Gastrocnemius medialis (tissue), 4 donors: ENCODE measurements at regions of chr4 and their contacts with region 1.

Region 1: DNA sequence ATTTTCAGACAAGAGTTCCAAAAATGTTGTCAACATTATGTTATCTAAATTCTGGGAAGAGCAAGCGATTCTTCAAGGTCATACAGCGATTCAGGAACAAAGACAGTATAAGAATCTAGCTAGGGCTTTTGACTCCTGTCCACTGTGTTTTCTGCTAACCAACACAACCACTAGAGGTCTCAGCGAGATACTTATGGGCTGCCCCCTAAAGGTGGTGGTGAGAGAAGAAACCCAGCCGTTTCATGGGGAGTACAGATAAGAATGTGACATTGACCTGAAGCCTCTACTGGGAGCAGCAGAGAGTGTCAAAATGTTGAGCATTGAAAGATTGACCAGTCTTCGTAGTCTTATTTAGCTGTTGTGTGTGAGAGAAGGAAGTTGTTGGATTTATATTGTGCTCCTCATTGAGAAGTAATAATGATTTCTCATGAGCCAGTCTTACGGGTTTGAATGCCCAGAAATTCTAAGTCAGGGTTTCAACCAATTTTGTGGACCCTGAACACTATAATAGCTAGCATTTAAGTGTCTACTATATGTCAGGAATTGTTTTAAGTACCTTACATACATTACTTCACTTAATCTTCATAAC is 168.3 kb downstream of the SPRY1 start:
- DNase-seq: peak; percentile 15 to 23
- ATAC-seq: peak; percentile 93 to 95
- H3K4me3 ChIP-seq: no peak overlapping the region
- H3K27ac ChIP-seq: no peak overlapping the region
- H3K4me1 ChIP-seq: no peaks in the 10 kb centered on the region
- H3K27me3 ChIP-seq: no peaks in the 10 kb centered on the region
- CTCF ChIP-seq: peak; percentile 63 to 84 (median 70)
- POLR2A ChIP-seq: no peak

Region 2: DNA sequence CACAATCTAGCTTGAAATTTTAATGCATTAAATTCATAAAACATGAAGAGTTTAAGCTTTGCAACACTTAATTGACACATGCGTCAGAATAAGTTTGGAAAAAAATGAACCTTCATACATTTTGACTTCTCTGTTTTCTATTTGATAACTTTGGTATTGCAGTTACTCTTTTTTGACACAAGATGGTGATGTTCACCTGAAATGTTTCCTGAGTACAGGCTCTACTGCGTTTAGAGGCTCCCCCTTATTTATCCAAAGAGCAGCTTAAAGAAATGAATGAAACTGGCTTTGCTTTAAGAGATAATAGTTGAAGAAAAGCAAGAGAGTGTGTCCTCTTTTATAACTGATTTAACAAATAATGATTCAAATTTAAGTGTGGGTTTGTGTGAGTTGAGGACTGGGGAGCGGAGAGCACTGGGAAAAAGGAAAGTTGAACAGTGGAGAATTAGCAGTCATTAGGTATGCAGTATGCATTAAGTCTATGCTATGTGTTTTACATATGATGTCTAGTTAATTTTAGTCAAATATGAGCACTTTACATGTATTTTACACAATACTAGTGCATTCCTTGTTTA is 461.9 kb before region 1 on chr4:
- in situ Hi-C with region 1: no loop called
- intact Hi-C with region 1: loop called (anchors 5 kb)
- DNase-seq: no peak
- ATAC-seq: peak in 1 of 2 donors; percentile 78
- H3K4me3 ChIP-seq: no peak overlapping the region
- H3K27ac ChIP-seq: no peak overlapping the region
- H3K4me1 ChIP-seq: peaks cover 0 to 3% of the 10 kb centered on the region in 2 donors
- H3K27me3 ChIP-seq: no peaks in the 10 kb centered on the region
- CTCF ChIP-seq: peak; percentile 47 to 75 (median 67)
- POLR2A ChIP-seq: no peak

Region 3: DNA sequence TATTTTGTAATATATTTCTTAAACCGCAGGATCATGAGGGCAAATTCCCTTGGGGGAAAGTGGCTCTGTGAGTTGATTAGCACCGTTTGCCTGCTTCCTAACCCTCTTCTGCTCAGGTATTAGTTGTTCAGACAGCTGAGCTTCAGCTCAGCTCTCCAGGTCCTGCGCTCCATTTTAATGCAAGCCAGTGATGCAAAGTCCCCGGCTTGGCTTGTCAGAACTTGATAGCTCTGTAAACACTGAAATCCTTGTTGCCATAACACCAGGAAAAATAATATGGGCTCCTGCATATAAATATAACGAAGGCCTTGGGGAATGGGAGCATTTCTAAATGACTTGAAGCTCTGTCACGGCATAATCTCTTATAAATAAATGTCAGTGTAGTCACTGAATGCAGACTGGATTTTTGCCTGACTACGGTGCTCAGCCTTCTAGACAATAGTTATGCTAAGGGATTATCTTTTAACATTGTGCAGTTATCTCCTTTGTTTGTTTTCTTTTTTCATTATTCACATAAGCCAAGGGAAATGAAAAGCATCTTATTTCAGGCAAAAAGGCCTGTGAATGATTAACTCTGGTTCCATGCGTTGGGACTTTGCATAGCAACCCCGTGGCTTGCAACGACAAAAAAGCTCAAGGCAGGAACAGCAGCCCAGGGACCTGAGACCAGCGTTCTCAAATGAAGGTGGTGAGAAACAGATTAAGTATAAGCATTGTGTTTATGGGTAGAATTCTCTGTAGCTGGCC is 85.0 kb after region 1 on chr4:
- in situ Hi-C with region 1: loop called in 2 of 4 experiments (anchors 10 to 25 kb)
- intact Hi-C with region 1: no loop called
- DNase-seq: peak; percentile 29 to 49
- ATAC-seq: peak; percentile 85 to 96
- H3K4me3 ChIP-seq: peak overlapping the region; percentile 19 to 35 (median 30)
- H3K27ac ChIP-seq: peak overlapping the region; percentile 77 to 81 (median 78)
- H3K4me1 ChIP-seq: peaks cover 32 to 41% of the 10 kb centered on the region in 2 donors
- H3K27me3 ChIP-seq: no peaks in the 10 kb centered on the region
- CTCF ChIP-seq: no peak
- POLR2A ChIP-seq: peak in 1 of 2 donors; percentile 23

Region 4: GRCh38 chr4:123661080-123661737 is 96.4 kb after region 1 on chr4:
- in situ Hi-C with region 1: loop called in 2 of 4 experiments (anchors 10 to 25 kb)
- intact Hi-C with region 1: loop called (anchors 5 kb)
- DNase-seq: no peak
- ATAC-seq: no peak
- H3K4me3 ChIP-seq: no peak overlapping the region
- H3K27ac ChIP-seq: no peak overlapping the region
- H3K4me1 ChIP-seq: peaks cover 8 to 13% of the 10 kb centered on the region in 2 donors
- H3K27me3 ChIP-seq: no peaks in the 10 kb centered on the region
- CTCF ChIP-seq: peak; percentile 28 to 61 (median 46)
- POLR2A ChIP-seq: no peak

Region 5: GRCh38 chr4:124579896-124580295 is 1015.0 kb after region 1 on chr4:
- in situ Hi-C with region 1: no loop called
- intact Hi-C with region 1: no loop called
- DNase-seq: no peak
- ATAC-seq: no peak
- H3K4me3 ChIP-seq: no peak overlapping the region
- H3K27ac ChIP-seq: no peak overlapping the region
- H3K4me1 ChIP-seq: no peaks in the 10 kb centered on the region
- H3K27me3 ChIP-seq: no peaks in the 10 kb centered on the region
- CTCF ChIP-seq: no peak
- POLR2A ChIP-seq: no peak